Transverse colon (tissue), 4 donors: ENCODE measurements at regions of chr12 and their contacts with region 1.

Region 1: DNA sequence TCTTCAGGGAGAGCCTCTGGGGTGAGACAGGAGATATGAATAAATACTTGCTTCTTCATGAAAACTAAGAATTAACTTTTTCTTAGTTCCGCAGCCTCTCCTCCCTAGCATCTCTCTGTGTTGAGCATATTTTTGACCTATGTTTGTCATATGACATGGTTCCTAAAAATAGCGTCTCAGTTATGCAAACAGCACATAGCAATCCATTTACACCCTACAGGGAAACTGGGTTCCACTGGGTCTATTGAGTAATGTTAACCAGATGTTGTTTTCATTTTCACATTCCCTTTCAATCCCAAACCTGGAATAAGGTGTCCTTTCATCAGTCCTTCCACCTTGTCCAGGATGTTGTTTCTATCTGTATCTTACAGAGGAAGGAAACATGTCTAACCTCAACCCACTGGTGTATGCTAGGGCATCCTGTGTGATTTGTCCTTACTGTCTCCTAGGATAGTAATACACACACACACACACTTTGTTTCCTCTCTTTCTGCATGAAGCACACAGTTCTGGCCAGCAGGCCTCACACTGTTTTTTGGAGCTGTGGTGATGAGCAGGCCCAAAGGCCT is 1543.5 kb downstream of the AACS start:
- DNase-seq: no peak
- H3K4me3 ChIP-seq: no peak overlapping the region
- H3K27ac ChIP-seq: no peak overlapping the region
- H3K4me1 ChIP-seq: no peaks in the 10 kb centered on the region
- H3K27me3 ChIP-seq: no peaks in the 10 kb centered on the region
- CTCF ChIP-seq: no peak
- EP300 ChIP-seq: no peak
- POLR2A ChIP-seq: no peak

Region 2: DNA sequence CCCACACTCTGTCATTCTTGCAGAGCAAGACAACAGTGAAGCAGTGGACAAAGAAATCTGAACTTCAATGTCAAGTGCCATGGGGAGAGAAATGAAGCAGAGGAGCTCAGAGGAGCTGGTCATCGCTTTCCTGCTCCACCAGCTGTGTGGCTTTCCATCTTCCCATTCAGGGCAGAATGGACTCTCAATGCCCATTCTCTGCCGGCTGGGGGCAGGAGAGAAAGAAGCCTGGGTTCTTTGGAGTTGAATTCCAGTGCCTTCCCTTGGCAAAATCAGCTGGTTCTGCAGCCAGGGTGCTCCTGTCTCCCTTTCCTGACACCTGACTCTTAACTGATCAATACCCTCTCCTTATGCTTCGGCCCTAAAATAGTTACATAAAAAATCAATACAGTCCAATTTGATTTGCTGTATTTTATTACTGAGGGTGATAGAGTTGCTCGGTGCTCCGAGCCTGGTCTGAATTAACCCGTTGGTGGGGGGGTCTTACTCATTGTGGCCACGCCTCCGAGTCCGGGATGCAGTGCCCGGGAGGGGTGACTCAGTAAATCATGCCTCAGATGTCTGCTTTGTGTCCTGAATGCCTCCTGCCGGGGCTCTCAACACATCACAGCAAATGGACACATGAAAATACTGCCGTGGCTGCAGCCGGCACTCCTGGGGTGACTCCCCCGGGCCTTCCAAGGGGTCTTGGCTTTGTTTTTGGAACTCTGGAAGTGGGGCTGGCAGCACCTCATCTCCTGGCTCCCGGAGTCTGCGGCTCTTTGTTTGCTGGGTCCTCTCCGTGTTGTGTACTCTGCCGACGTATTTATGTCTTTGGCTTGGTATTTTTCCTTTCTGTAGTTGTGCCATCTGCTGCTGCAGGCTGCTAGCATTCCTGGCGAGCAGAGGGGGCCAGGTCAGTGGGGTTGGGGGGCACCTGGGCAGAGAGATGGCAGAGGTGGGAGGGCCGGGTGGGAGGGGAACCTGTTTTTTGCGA is 1414.6 kb before region 1 on chr12:
- in situ Hi-C with region 1: no loop called
- intact Hi-C with region 1: loop called (anchors 5 kb)
- DNase-seq: no peak
- H3K4me3 ChIP-seq: no peak overlapping the region
- H3K27ac ChIP-seq: no peak overlapping the region
- H3K4me1 ChIP-seq: no peaks in the 10 kb centered on the region
- H3K27me3 ChIP-seq: peaks cover 66% of the 10 kb centered on the region
- CTCF ChIP-seq: no peak
- EP300 ChIP-seq: no peak
- POLR2A ChIP-seq: no peak

Region 3: GRCh38 chr12:126483145-126484068 is 125.3 kb before region 1 on chr12:
- in situ Hi-C with region 1: no loop called
- intact Hi-C with region 1: no loop called
- DNase-seq: no peak
- H3K4me3 ChIP-seq: no peak overlapping the region
- H3K27ac ChIP-seq: peak overlapping the region in 1 of 4 donors; percentile 19
- H3K4me1 ChIP-seq: no peaks in the 10 kb centered on the region
- H3K27me3 ChIP-seq: no peaks in the 10 kb centered on the region
- CTCF ChIP-seq: no peak
- EP300 ChIP-seq: no peak
- POLR2A ChIP-seq: no peak

Region 4: DNA sequence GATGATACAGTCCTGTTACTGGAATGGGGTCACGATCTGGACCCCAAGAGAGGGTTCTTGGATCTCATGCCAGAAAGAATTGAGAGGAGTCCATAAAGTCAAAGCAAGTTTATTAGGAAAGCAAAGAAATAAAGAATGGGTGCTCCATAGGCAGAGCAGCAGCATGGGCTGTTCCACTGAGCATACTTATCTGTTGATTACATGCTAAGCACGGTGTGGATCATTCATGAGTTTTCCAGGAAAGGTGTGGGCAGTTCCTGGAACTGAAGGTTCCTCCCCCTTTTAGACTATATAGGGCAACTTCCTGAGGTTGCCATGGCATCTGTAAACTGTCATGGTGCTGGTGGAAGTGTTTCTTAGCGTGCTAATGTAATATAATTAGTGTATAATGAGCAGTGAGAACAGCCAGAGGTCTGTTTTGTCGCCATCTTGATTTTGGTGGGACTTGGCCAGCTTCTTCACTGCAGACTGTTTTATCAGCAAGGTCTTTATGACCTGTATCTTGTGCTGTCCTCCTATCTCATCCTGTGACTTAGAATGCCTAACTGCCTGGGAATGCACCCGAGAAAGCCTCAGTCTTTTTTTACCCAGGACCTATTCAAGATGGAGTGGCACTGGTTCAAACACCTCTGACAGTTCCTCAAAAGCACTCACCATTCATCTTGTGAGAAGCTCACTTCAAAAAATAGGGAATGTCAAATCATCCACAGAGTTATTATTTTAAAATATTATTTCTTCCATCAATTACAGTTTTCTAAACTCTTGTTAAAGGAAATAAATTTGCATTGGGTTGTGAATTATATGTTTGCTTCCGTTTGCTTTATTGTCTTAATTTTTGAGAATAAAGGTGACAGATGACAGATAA is 299.4 kb after region 1 on chr12:
- in situ Hi-C with region 1: no loop called
- intact Hi-C with region 1: no loop called
- DNase-seq: no peak
- H3K4me3 ChIP-seq: no peak overlapping the region
- H3K27ac ChIP-seq: no peak overlapping the region
- H3K4me1 ChIP-seq: no peaks in the 10 kb centered on the region
- H3K27me3 ChIP-seq: no peaks in the 10 kb centered on the region
- CTCF ChIP-seq: no peak
- EP300 ChIP-seq: no peak
- POLR2A ChIP-seq: no peak